ENCODE measurements at regions of chr2 and their contacts with region 1.

Region 1: DNA sequence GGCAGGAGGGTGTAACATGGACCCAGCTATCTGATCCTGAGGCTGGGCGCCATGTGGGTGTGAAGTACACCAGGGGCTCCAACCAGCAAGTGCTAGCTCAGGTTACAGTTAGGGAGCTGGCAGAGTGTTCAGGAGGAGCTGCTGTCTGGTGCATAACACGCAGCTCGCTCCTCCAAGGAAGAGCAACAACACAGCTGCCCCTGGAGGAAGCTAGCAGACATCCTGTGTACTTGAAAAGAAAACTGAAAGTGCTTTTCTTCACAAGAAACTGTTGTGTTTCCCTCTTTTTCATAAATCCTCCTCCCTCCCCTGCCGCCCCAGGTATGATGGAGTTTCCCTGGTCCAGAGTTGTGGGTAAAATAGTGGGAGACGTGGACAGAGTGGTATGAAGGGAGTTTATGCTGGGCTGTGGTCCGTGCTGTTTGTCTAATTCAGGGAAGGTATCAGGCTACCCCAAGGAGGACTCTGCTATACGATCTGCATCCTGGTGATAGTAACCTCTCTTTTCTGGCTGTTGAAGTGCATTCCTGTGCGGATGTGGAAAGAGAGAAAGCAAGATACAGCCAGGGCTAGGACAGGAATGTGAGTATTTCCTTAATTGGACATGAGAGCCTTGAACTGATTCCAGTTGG is 6.1 kb upstream of the LBH start:
- DNase-seq: peak; percentile 33 to 74 (median 66)
- H3K4me3 ChIP-seq: peak overlapping the region; percentile 63
- H3K4me3 Mint-ChIP-seq: peak overlapping the region; percentile 87 to 99 (median 96)
- H3K27ac ChIP-seq: peak overlapping the region; percentile 76
- H3K27ac Mint-ChIP-seq: peak overlapping the region; percentile 98 to 100 (median 100)
- H3K4me1 ChIP-seq: peaks cover 66% of the 10 kb centered on the region
- H3K4me1 Mint-ChIP-seq: peaks cover 75 to 86% (median 86%) of the 10 kb centered on the region in 3 donors
- H3K27me3 ChIP-seq: no peaks in the 10 kb centered on the region
- H3K27me3 Mint-ChIP-seq: peaks cover 0 to 1% of the 10 kb centered on the region in 2 donors

Region 2: GRCh38 chr2:30146438-30147147 is 78.7 kb before region 1 on chr2 and contains the start of gene YPEL5:
- CTCF ChIA-PET with region 1: interaction called, 5 read pairs
- POLR2A ChIA-PET with region 1: interaction called, 83 read pairs
- DNase-seq: peak; percentile 99 to 100 (median 99)
- H3K4me3 ChIP-seq: peak within 1 kb of the TSS; percentile 71
- H3K4me3 Mint-ChIP-seq: peak within 1 kb of the TSS; percentile 86 to 94 (median 90)
- H3K27ac ChIP-seq: peak within 1 kb of the TSS; percentile 100
- H3K27ac Mint-ChIP-seq: peak within 1 kb of the TSS; percentile 98 to 100 (median 99)
- H3K4me1 ChIP-seq: peaks cover 51% of the 10 kb centered on the region
- H3K4me1 Mint-ChIP-seq: peaks cover 45 to 57% (median 50%) of the 10 kb centered on the region in 3 donors
- H3K27me3 ChIP-seq: no peaks in the 10 kb centered on the region
- H3K27me3 Mint-ChIP-seq: peaks cover 0 to 7% of the 10 kb centered on the region in 2 donors
- total RNA-seq, gene YPEL5: 35.7 to 38.3 TPM